ENCODE measurements at regions of chr3 and their contacts with region 1.

Region 1: GRCh38 chr3:156519758-156520162 is 35.2 kb downstream of the SSR3 start:
- DNase-seq: peak; percentile 34
- H3K4me3 Mint-ChIP-seq: no peak overlapping the region
- H3K27ac Mint-ChIP-seq: no peak overlapping the region
- H3K4me1 Mint-ChIP-seq: peaks cover 17% of the 10 kb centered on the region
- H3K27me3 Mint-ChIP-seq: peaks cover 21% of the 10 kb centered on the region

Region 2: DNA sequence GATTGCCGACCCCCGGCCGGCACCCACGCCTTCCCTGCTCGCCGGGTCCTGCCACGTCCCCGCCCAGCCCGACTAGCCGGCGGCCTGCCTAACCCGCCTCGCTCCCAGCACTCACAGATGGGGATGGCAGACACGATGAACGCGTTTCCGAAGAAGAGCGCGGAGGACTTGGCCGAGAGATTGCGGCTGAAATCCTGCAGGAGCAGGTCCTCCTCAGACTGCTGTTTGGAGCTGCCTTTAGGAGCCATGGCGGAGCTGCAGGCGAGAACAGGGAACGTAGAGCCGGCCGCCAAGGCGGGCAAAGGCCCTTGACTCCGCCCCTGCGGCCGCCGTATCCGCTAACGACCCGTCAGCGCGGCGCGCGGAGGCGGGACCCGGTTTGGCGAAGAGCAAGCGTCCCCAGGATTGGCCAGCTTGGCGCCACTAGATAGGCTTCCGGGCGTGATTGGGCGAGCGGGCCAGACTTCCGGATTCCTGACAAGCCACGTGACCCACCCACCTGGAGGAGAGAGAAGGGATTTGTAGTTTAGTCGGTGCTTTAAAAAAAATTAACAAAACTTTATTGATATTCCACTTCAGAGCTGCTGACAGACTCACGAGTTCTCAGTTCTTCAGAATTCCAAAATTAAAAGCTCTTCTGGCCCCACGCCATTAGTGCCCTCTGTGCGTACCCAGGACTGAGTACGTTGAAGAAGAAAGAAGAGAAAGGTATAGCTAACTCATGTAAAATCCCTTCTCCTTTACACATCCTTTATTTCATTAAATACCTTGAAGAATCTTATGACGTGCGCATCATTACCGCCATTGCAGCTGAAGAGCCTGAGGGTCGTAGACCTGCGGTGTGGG is 35.3 kb after region 1 on chr3 and contains the start of gene SSR3:
- CTCF ChIA-PET with region 1: interaction called, 3 read pairs
- intact Hi-C with region 1: loop called (anchors 1 kb)
- DNase-seq: peak; percentile 99
- H3K4me3 Mint-ChIP-seq: peak within 1 kb of the TSS; percentile 90
- H3K27ac Mint-ChIP-seq: peak within 1 kb of the TSS; percentile 86
- H3K4me1 Mint-ChIP-seq: peaks cover 40% of the 10 kb centered on the region
- H3K27me3 Mint-ChIP-seq: no peaks in the 10 kb centered on the region
- total RNA-seq, gene SSR3: 128 to 138 TPM

Measured in activated naive CD4-positive, alpha-beta T cell treated with anti-CD3 and anti-CD28 coated beads for 36 hours (primary cell).